ENCODE measurements at regions of chr12 and their contacts with region 1.

Region 1: GRCh38 chr12:109477185-109477962 is at the starts of genes KCTD10 and UBE3B:
- DNase-seq: peak; percentile 28
- H3K4me3 ChIP-seq: peak within 1 kb of the TSS; percentile 84
- H3K27me3 ChIP-seq: no peaks in the 10 kb centered on the region
- CTCF ChIP-seq: no peak
- polyA plus RNA-seq, gene KCTD10: 154 and 172 TPM in 2 replicates
- polyA plus RNA-seq, gene UBE3B: 38.9 and 43.9 TPM in 2 replicates

Region 2: GRCh38 chr12:108967869-108968540 is 509.4 kb before region 1 on chr12:
- CTCF ChIA-PET with region 1: no interaction called
- POLR2A ChIA-PET with region 1: no interaction called
- DNase-seq: no peak
- H3K4me3 ChIP-seq: no peak overlapping the region
- H3K27me3 ChIP-seq: peaks cover 5% of the 10 kb centered on the region; the same call in 1 of the 2 replicates
- CTCF ChIP-seq: peak; percentile 28; the same call in 1 of the 2 replicates

Region 3: GRCh38 chr12:109462710-109463692 is 14.4 kb before region 1 on chr12:
- CTCF ChIA-PET with region 1: interaction called, 5 read pairs
- POLR2A ChIA-PET with region 1: interaction called, 11 read pairs
- DNase-seq: peak; percentile 95
- H3K4me3 ChIP-seq: no peak overlapping the region
- H3K27me3 ChIP-seq: no peaks in the 10 kb centered on the region
- CTCF ChIP-seq: no peak